ENCODE measurements at regions of chr12 and their contacts with region 1.

Region 1: DNA sequence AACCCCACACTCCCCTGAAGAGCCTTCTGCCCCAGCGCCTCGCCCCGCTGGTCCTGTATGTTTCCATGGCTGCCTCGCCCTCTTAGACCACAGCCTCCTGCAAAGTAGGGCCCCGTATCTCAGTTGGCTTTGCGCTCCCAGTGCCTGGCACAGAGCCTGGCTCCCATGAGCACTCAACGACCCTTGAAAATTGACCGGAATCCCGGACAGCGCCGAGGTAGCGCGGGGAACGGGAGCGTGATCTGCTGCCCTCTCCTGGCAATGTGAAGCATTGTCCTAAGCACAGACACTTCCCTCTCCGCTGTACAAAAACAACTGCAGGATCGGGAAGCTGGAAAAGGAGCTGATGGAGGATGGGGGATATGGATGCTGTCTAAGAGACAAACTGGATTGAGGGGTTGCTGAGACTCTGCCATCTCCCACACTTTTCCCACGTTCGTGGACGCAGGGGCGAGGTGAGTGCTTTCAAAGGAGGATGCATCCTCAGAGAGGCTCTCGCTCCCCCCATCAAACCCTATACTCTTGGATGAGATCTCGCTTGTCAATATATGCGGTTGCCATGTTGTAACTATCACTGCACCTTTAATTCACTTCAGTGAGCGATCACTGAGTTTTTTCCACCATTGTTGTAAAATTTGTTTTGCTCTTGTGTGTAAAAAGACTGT is 10.7 kb upstream of the FKBP4 start:
- DNase-seq: peak; percentile 52
- H3K4me3 ChIP-seq: no peak overlapping the region
- H3K27ac ChIP-seq: no peak overlapping the region
- H3K4me1 ChIP-seq: no peaks in the 10 kb centered on the region
- H3K27me3 ChIP-seq: peaks cover 20 to 21% of the 10 kb centered on the region in 2 experiments
- CTCF ChIP-seq: peak; percentile 88 to 93
- POLR2A ChIP-seq: no peak

Region 2: GRCh38 chr12:2640705-2641104 is 143.4 kb before region 1 on chr12:
- CTCF ChIA-PET with region 1: interaction called, 9 read pairs
- POLR2A ChIA-PET with region 1: no interaction called
- dilution Hi-C with region 1: no loop called
- intact Hi-C with region 1: loop called (anchors 1 kb)
- DNase-seq: peak; percentile 93
- H3K4me3 ChIP-seq: no peak overlapping the region
- H3K27ac ChIP-seq: peak overlapping the region; percentile 88
- H3K4me1 ChIP-seq: peaks cover 17% of the 10 kb centered on the region
- H3K27me3 ChIP-seq: peaks cover 2 to 6% of the 10 kb centered on the region in 2 experiments
- CTCF ChIP-seq: no peak
- POLR2A ChIP-seq: no peak

Region 3: DNA sequence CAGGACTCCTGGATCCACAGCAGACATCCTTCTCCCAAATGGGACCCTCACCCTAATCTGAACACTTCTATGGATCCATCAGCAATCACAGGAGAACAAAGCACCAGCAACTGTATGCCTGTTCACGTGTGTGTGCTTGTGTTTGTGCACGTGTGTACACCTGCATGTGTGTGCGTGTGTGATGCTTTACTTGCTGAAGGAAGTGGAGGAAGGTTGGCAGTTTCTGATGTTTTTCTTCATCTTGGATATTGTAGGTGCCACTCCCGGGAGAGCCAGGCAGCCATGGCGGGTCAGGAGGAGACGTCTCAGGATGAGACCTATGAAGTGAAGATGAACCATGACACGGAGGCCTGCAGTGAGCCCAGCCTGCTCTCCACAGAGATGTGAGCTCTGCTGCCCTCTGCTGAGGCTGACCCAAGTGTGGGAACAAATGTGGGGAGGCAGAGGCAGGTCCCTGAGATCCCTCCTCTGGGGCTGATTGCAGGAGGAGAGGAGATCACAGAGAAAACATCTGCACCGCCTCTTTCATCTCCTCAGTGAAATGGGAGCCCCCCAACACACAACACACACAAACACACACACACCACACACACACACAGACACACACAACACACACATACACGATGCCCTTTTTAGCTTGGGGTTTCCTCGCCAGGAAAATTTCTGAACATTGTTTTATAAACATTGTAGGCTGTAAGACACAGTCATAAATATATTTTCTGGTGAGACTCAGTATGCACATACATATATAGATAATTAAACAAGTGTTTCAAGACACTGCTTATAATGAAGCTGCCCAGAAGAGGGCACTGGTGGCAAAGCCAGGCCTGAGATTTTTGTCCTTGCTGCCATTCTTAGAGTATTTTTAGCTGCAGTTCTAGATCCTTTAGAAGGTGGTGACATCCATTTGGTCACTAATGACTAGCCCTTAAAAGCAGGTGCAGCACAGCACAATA is 101.5 kb before region 1 on chr12:
- CTCF ChIA-PET with region 1: interaction called, 36 read pairs
- POLR2A ChIA-PET with region 1: no interaction called
- dilution Hi-C with region 1: no loop called
- intact Hi-C with region 1: loop called (anchors 2 kb)
- DNase-seq: peak; percentile 30
- H3K4me3 ChIP-seq: no peak overlapping the region
- H3K27ac ChIP-seq: no peak overlapping the region
- H3K4me1 ChIP-seq: no peaks in the 10 kb centered on the region
- H3K27me3 ChIP-seq: no peaks in the 10 kb centered on the region
- CTCF ChIP-seq: peak in 1 of 2 donors; percentile 20
- POLR2A ChIP-seq: no peak

Region 4: DNA sequence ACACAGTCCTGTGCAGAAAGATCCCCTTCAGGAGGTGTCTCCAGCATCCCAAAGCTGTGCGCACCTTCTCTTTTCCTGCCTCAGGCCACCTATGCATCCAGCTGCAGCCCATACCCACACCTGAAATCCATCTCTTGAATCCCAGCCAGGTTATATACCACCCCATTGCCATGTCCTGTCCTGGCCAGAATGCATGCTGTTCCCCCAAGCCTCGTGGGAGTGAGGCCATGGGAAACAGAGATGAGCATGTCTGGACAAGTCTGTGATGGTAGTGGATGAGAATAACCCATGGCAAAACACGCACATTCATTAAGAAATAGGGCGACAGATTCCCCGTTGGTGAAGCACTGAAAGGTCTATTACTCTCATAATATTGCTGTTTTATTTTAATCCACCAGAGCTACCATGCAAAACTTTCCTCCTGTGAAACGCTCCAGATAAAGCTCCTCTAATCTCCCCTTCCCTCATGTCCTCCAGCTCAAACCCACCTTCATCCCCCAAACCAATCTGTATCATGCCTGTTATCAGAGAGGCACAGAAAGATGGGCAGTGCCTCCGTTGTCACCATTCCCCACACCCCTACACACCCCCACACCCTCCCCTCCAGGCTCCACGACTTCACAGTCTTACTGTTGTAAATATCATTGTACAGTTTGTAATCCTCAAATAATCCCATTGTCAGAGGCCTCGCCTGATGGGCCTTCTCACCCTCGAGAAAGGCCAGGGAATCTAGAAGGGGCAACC is 86.8 kb before region 1 on chr12:
- CTCF ChIA-PET with region 1: no interaction called
- POLR2A ChIA-PET with region 1: no interaction called
- dilution Hi-C with region 1: no loop called
- intact Hi-C with region 1: no loop called
- DNase-seq: no peak
- H3K4me3 ChIP-seq: no peak overlapping the region
- H3K27ac ChIP-seq: no peak overlapping the region
- H3K4me1 ChIP-seq: no peaks in the 10 kb centered on the region
- H3K27me3 ChIP-seq: peaks cover 10 to 11% of the 10 kb centered on the region in 2 experiments
- CTCF ChIP-seq: no peak
- POLR2A ChIP-seq: no peak

Region 5: GRCh38 chr12:2739817-2740641 is 44.0 kb before region 1 on chr12:
- CTCF ChIA-PET with region 1: interaction called, 38 read pairs
- POLR2A ChIA-PET with region 1: no interaction called
- dilution Hi-C with region 1: no loop called
- intact Hi-C with region 1: loop called (anchors 2 kb)
- DNase-seq: peak; percentile 37
- H3K4me3 ChIP-seq: no peak overlapping the region
- H3K27ac ChIP-seq: no peak overlapping the region
- H3K4me1 ChIP-seq: no peaks in the 10 kb centered on the region
- H3K27me3 ChIP-seq: no peaks in the 10 kb centered on the region
- CTCF ChIP-seq: peak; percentile 25 to 29
- POLR2A ChIP-seq: no peak

Region 6: GRCh38 chr12:2794736-2795289 is 10.7 kb after region 1 on chr12 and contains the start of gene FKBP4:
- CTCF ChIA-PET with region 1: interaction called, 12 read pairs
- POLR2A ChIA-PET with region 1: no interaction called
- dilution Hi-C with region 1: no loop called
- intact Hi-C with region 1: no loop called
- DNase-seq: peak; percentile 82
- H3K4me3 ChIP-seq: peak within 1 kb of the TSS; percentile 69 to 93 (median 73)
- H3K27ac ChIP-seq: peak within 1 kb of the TSS; percentile 1
- H3K4me1 ChIP-seq: peaks cover 23% of the 10 kb centered on the region
- H3K27me3 ChIP-seq: peaks cover 5 to 7% of the 10 kb centered on the region in 2 experiments
- CTCF ChIP-seq: no peak
- POLR2A ChIP-seq: peak; percentile 76
- total RNA-seq, gene FKBP4: 74.1 and 85.6 TPM in 2 replicates

Region 7: DNA sequence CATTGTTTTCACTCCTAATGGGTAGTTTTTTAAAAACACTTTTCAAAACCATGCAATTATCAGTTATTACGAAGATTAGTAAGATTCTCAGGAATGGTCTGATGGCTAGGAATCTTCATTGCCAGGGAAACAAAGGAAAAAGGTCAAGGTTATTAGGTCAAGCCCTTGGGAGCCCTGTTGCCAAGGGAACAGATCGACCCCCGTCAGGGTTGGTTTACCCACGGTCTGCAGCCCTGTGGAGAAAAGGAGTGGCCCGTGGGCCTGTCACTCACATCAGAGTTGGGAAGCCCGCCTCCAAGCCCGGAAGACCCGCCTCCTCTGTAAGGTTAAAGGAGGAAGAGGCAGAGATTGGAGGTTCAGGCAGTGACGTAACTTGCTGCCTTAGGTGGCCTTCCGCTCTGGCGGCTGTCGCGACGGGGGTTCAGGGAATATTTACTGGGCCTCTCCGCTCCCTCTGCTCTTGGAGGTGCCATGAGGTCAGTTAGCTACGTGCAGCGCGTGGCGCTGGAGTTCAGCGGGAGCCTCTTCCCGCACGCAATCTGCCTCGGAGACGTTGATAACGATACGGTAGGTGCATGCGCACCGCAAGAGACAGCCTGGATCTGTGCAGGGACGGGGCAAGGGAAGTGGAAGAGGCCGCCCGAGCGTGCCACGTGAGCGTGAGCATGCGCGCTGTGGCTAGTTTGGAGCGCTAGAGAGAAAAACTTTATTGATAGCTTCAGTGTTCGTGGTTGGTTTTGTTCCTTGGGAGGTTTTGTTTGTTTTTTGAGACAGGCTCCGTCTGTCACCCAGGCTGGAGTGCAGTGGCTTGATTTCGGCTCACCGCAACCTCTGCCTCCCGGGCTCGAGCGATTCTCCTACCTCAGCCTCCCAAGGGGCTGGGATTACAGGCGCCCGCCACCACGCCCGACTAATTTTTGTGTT is 28.5 kb after region 1 on chr12 and contains the start of gene ITFG2:
- CTCF ChIA-PET with region 1: interaction called, 19 read pairs
- POLR2A ChIA-PET with region 1: no interaction called
- dilution Hi-C with region 1: no loop called
- intact Hi-C with region 1: no loop called
- DNase-seq: peak; percentile 98
- H3K4me3 ChIP-seq: peak within 1 kb of the TSS; percentile 58 to 94 (median 71)
- H3K27ac ChIP-seq: peak within 1 kb of the TSS; percentile 52
- H3K4me1 ChIP-seq: peaks cover 6% of the 10 kb centered on the region
- H3K27me3 ChIP-seq: no peaks in the 10 kb centered on the region
- CTCF ChIP-seq: no peak
- POLR2A ChIP-seq: peak; percentile 97
- total RNA-seq, gene ITFG2: 31.9 and 34.5 TPM in 2 replicates